Right ventricle myocardium inferior (tissue), 1 donor: ENCODE measurements at regions of chr13 and their contacts with region 1.

Region 1: GRCh38 chr13:27826379-27827353 is 34.4 kb downstream of the GSX1 start:
- DNase-seq: peak; percentile 88
- ATAC-seq: peak; percentile 92

Region 2: DNA sequence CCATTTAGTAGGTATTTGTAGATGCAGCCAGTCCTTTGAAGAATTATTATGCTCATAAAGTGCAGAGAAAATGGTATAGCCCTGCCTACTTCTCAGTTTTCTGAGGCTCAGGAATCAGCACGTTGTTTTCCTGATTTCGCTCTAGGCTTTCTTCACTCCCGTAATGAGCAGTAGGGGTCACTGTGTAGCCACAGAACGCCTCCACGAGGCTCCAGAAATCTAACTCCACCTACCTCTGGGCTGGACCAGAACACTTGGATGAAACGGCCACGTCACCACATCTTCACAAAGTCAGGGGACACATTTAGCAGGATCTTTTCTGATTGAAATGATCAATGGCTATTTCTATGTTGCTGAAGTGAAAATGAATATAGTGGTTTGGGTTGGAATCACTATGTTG is 452.0 kb before region 1 on chr13:
- intact Hi-C with region 1: loop called (anchors 5 kb)
- DNase-seq: peak; percentile 49
- ATAC-seq: peak; percentile 90

Region 3: DNA sequence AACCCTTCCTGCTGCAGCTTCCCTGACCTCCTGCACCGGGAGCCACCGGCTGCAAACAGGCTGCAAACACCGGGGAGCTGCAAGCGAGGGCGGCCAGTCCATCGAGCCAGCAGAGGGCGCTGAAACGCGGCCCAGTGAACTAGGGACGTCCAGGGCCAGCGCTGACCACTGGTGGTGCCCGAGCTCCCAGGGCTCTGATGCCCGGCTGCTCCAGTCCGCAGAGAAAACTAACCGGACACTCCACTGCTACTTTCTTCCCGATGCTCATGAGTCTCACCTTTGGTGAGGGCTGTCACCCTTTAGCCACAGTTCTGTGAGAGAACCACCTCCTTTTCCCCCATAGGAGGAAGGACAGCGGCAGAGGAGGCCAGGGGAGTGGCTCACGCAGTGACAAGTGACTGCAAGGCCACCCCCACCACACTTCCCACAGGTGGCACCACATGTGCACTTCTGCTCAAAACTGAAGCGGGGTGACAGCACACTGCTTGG is 293.5 kb before region 1 on chr13:
- intact Hi-C with region 1: loop called (anchors 2 kb)
- DNase-seq: peak; percentile 91
- ATAC-seq: peak; percentile 93

Region 4: GRCh38 chr13:27667946-27668345 is 158.7 kb before region 1 on chr13:
- intact Hi-C with region 1: loop called (anchors 2 kb)
- DNase-seq: no peak
- ATAC-seq: peak; percentile 67

Region 5: DNA sequence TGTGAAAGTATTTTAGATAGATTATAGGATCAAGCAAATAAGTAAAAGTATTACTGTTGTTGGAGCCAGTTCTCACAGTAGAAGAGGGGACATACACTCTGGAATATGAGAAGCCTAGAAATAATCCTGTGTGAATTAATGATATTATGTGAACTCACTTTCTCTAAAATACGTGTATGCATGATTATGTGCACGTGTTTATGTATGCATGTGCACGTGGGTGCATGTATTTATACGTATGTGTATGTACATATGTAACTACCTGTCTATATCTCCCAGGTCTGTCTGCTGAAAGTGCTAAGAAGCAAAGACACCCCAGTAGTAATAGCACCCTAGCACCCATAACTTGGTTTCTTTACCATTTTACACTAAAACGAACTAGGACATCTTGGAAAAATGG is 51.6 kb after region 1 on chr13:
- intact Hi-C with region 1: no loop called
- DNase-seq: no peak
- ATAC-seq: no peak

Region 6: GRCh38 chr13:27953676-27954405 is 127.2 kb after region 1 on chr13:
- intact Hi-C with region 1: loop called (anchors 10 kb)
- DNase-seq: peak; percentile 89
- ATAC-seq: peak; percentile 96

Region 7: DNA sequence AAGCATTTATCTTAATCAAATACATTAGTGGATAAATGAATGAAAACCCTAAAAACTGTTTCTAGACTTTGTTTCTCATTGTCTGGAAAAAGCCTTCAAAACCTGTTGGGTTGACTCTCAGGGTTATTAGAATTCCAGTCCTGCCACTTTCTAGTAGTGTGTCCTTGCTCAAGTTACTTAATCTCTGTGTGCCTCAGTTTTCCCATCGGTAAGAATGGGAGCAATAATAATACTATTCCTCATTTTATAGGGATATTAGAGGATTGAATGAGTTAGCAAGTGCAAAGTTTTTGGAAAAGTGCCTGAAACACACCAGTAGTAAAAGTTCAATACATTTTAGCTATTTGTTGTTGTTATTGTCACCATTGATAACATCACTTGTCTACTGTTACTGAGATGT is 158.9 kb after region 1 on chr13:
- intact Hi-C with region 1: loop called (anchors 2 kb)
- DNase-seq: no peak
- ATAC-seq: no peak

Region 8: GRCh38 chr13:28012896-28013295 is 186.2 kb after region 1 on chr13:
- intact Hi-C with region 1: no loop called
- DNase-seq: no peak
- ATAC-seq: no peak